ENCODE measurements at regions of chr7 and their contacts with region 1.

Region 1: DNA sequence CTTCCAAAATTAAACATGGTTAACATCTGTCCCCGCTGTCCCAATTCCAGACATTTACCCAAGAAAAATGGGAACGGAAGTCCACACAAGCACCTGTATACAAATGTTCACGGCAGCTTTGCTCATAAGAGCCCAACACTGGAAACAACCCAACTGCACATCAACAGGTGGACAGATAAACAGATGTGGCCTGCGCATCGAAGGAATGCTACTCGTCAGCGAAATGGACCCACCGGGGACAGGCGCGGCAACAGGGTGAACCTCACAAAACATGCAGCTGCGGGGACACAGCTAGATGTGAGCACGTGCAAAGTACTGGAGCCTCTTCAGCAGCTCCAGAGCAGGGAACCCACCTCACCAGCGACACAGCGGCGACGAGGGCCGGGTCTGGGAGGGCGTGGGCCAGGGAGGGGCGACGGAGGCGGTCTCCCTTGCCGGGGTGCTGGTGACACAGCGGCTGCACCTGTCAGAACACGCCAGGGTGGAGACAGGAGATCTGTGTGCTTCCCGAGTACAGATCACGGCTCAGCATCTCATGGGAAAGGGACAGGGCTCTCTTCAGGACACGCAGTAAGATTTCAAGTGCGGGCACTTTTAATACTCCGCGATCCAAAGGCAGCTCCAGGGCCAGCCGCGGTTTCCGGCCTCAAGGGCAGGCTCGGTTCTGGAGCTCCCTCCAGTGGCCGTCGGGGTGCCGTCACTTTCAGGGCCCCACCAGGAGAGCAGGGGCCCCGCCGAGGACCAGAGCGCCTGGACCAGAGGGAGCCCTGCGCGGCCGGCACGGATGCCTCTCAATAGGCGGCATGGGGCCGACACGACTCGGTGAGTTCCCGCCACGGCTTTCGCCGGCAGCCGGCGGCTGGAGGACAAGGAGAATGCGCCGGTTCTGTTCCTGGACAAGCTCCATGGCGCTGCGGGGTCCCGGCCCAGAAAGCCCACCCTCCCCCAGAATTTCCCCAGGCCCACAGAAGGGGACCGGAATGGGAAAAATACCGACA is 21.2 kb downstream of the GPR146 start:
- DNase-seq: peak; percentile 92
- ATAC-seq: peak; percentile 98
- H3K4me3 Mint-ChIP-seq: peak overlapping the region; percentile 36
- H3K27ac Mint-ChIP-seq: no peak overlapping the region
- H3K4me1 Mint-ChIP-seq: peaks cover 5% of the 10 kb centered on the region
- H3K27me3 Mint-ChIP-seq: peaks cover 2% of the 10 kb centered on the region

Region 2: GRCh38 chr7:909358-910329 is 155.9 kb before region 1 on chr7:
- CTCF ChIA-PET with region 1: no interaction called
- POLR2A ChIA-PET with region 1: no interaction called
- intact Hi-C with region 1: loop called in 1 of 2 experiments (anchors 1 kb)
- DNase-seq: peak; percentile 37
- ATAC-seq: peak; percentile 28
- H3K4me3 Mint-ChIP-seq: peak overlapping the region; percentile 30
- H3K27ac Mint-ChIP-seq: no peak overlapping the region
- H3K4me1 Mint-ChIP-seq: peaks cover 10% of the 10 kb centered on the region
- H3K27me3 Mint-ChIP-seq: no peaks in the 10 kb centered on the region

Region 3: GRCh38 chr7:992709-993607 is 72.6 kb before region 1 on chr7:
- CTCF ChIA-PET with region 1: interaction called, 135 read pairs
- POLR2A ChIA-PET with region 1: no interaction called
- intact Hi-C with region 1: loop called (anchors 1 kb)
- DNase-seq: peak; percentile 99
- ATAC-seq: peak; percentile 100
- H3K4me3 Mint-ChIP-seq: no peak overlapping the region
- H3K27ac Mint-ChIP-seq: no peak overlapping the region
- H3K4me1 Mint-ChIP-seq: peaks cover 3% of the 10 kb centered on the region
- H3K27me3 Mint-ChIP-seq: no peaks in the 10 kb centered on the region

Region 4: GRCh38 chr7:1020849-1021251 is 44.7 kb before region 1 on chr7:
- CTCF ChIA-PET with region 1: interaction called, 7 read pairs
- POLR2A ChIA-PET with region 1: no interaction called
- intact Hi-C with region 1: loop called in 1 of 2 experiments (anchors 1 kb)
- DNase-seq: peak; percentile 33
- ATAC-seq: no peak
- H3K4me3 Mint-ChIP-seq: no peak overlapping the region
- H3K27ac Mint-ChIP-seq: no peak overlapping the region
- H3K4me1 Mint-ChIP-seq: peaks cover 2% of the 10 kb centered on the region
- H3K27me3 Mint-ChIP-seq: no peaks in the 10 kb centered on the region

Region 5: DNA sequence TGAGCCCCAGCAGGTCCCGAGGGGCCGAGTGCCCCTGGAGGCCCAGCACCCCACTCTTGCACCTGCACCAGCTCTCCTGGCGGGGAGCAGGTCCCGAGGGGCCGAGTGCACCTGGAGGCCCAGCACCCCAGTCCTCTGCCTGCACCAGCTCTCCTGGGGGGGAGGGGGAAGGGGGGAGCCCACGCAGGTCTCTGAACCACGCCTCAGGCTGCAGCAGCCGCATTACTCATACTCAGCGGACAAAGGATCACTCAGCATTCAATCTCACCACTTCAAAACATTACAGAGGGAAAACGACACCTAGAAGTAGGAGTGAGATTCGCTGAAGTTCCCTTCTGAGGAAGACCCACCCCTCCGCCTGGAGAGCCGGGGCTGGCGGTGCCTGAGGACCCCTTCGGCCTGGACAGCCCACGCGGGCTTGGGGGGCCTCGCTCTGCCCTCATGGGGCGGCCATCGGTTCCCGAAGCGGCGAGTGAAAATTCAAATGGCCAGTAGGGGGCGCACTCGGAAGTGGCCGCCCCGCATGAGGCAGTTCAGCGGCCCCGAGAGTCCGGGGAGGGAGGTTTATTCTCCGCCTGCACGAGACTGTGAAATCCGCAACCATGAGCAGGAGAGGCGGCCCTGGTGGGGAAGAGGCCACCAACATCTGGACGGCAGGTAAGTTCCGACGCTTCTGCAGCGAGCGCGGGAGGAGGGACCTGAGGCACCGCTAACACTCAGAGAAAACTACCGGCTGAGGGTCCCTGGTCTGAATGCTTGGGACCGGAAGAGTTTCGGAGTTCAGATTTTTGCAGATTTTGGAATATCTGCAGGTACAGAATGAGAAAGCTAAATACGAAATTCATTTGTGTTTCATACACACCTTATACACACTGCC is 21.3 kb after region 1 on chr7:
- CTCF ChIA-PET with region 1: interaction called, 15 read pairs
- POLR2A ChIA-PET with region 1: no interaction called
- intact Hi-C with region 1: no loop called
- DNase-seq: peak; percentile 86
- ATAC-seq: peak; percentile 88
- H3K4me3 Mint-ChIP-seq: peak overlapping the region; percentile 53
- H3K27ac Mint-ChIP-seq: peak overlapping the region; percentile 29
- H3K4me1 Mint-ChIP-seq: peaks cover 12% of the 10 kb centered on the region
- H3K27me3 Mint-ChIP-seq: no peaks in the 10 kb centered on the region

Measured in activated CD4-positive, alpha-beta T cell treated with anti-CD3 and anti-CD28 coated beads for 36 hours (primary cell).